ENCODE measurements at regions of chr9 and their contacts with region 1.

Region 1: GRCh38 chr9:128420060-128420650 is 502 bp upstream of the CERCAM start:
- DNase-seq: peak in 6 of 10 donors; percentile 58 to 85 (median 69)
- H3K4me3 ChIP-seq: peak overlapping the region; percentile 60 to 90 (median 79)
- H3K27ac ChIP-seq: peak overlapping the region in 57 of 59 donors; percentile 33 to 100 (median 89)
- H3K27me3 ChIP-seq: peaks cover 0 to 2% (median 0%) of the 10 kb centered on the region in 45 donors
- CTCF ChIP-seq: peak in 55 of 56 donors; percentile 47 to 91 (median 78)

Region 2: DNA sequence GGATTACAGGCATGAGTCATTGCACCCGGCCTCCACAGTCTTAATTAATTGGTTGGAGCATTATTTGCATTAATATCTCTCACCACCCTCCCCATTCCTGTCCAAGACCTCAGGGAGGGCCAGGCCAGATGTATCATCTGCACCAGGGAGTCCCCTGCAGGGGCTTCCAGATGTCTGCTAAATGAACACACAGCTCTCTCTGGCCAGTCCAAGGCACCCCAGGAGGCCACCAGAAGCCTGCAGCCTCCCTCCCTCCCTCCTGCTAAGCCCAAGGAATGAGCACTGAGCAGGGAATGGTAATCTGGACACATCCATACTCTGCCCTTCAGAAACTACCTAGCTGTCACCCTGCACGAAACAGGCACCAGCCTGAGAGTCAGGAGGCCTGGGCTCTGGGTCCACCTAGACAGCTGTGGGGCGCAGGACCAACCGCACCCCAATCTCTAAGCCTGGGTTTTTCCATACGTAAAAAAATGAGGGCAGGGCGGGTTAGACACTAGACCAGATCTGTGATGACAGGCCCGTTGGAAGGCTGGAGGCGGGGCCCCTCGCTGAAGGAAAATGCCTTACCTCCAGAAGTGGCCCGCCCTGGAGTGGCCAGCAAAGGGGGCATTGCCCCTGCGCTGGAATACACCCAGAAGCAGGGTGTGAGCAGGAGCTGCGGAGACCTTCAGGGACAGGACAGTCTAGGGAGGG is 237.1 kb before region 1 on chr9:
- intact Hi-C with region 1: loop called in 1 of 2 experiments (anchors 10 kb)
- DNase-seq: no peak
- H3K4me3 ChIP-seq: no peak overlapping the region
- H3K27ac ChIP-seq: peak overlapping the region in 2 of 59 donors; percentile 13 to 15
- H3K27me3 ChIP-seq: no peaks in the 10 kb centered on the region
- CTCF ChIP-seq: no peak